ENCODE measurements at regions of chr14 and their contacts with region 1.

Region 1: DNA sequence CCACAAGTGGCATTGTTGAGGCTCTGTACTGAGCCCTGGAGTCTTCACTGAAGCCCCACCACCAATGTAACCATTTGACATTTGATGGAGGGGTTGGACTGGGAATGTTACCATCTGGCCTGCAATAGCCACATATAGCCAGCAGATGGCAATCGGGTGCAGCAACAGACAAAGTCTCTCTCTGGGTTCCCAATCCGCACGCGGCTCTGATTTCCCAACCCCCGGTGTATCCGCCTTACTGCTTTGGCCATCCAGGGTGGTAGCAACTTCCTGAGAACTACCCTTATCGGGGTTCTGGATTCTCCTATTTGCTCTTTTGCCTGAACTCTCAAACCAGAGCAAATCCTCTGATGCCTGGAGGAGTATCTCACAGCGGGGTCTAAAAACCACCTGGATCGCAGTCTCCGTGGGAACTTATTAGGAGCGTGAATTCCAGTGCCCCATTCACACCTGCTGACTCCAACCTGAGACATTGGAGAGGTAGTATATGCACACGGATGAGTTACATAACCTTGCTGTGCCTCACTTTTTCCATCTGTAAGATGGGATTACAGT is 14.2 kb downstream of the VRTN start:
- DNase-seq: peak; percentile 89 to 92
- ATAC-seq: peak; percentile 84
- H3K4me3 ChIP-seq: no peak overlapping the region
- H3K27ac ChIP-seq: no peak overlapping the region
- H3K4me1 ChIP-seq: no peaks in the 10 kb centered on the region
- H3K27me3 ChIP-seq: no peaks in the 10 kb centered on the region

Region 2: GRCh38 chr14:73759714-73760597 is 602.5 kb before region 1 on chr14:
- intact Hi-C with region 1: no loop called
- DNase-seq: peak; percentile 98 to 99
- ATAC-seq: peak; percentile 91
- H3K4me3 ChIP-seq: peak overlapping the region; percentile 80 to 83
- H3K27ac ChIP-seq: peak overlapping the region; percentile 83 to 92
- H3K4me1 ChIP-seq: no peaks in the 10 kb centered on the region
- H3K27me3 ChIP-seq: no peaks in the 10 kb centered on the region

Region 3: GRCh38 chr14:74437496-74438053 is 75.1 kb after region 1 on chr14:
- intact Hi-C with region 1: no loop called
- DNase-seq: no peak
- ATAC-seq: no peak
- H3K4me3 ChIP-seq: no peak overlapping the region
- H3K27ac ChIP-seq: no peak overlapping the region
- H3K4me1 ChIP-seq: no peaks in the 10 kb centered on the region
- H3K27me3 ChIP-seq: no peaks in the 10 kb centered on the region

Region 4: GRCh38 chr14:74459289-74459946 is 97.0 kb after region 1 on chr14:
- intact Hi-C with region 1: no loop called
- DNase-seq: peak in 1 of 2 donors; percentile 57
- ATAC-seq: peak; percentile 59
- H3K4me3 ChIP-seq: no peak overlapping the region
- H3K27ac ChIP-seq: no peak overlapping the region
- H3K4me1 ChIP-seq: no peaks in the 10 kb centered on the region
- H3K27me3 ChIP-seq: no peaks in the 10 kb centered on the region

Region 5: GRCh38 chr14:74483321-74483720 is 120.9 kb after region 1 on chr14:
- intact Hi-C with region 1: loop called in 1 of 2 experiments (anchors 5 kb)
- DNase-seq: no peak
- ATAC-seq: no peak
- H3K4me3 ChIP-seq: no peak overlapping the region
- H3K27ac ChIP-seq: no peak overlapping the region
- H3K4me1 ChIP-seq: no peaks in the 10 kb centered on the region
- H3K27me3 ChIP-seq: no peaks in the 10 kb centered on the region

Region 6: DNA sequence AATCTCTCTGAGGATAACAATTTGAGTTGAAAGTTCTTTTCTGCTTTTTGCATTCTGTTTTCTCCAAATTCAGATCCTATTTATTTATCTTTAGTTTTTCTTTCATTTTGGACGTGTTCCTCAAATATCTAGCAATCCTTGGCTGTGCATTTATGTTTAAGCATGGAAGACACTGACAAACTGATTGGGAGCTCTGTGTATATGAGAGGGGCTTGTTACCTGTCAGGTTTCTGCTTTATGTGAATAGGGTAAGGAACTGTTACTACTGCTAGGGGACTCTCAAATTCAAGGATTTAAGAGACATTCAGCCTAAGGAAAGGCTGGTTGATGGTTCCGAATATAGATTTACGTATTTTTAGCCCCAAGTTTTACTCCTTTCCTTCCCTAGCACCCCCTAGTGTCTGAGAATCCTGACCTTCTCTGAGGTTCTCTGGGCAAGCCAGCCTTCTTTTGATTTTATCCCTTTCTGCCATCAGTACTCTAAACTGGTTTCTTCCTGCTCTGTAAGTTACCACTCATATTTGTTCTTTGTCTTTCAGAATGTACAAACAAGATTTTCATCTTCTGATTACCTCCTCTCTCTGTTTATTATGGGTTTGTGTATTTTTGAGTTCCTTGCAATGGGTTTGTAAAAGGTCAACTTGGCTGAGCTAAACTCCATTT is 431.2 kb after region 1 on chr14:
- intact Hi-C with region 1: loop called (anchors 10 kb)
- DNase-seq: no peak
- ATAC-seq: no peak
- H3K4me3 ChIP-seq: no peak overlapping the region
- H3K27ac ChIP-seq: peak overlapping the region in 1 of 2 donors; percentile 76
- H3K4me1 ChIP-seq: peaks cover 0 to 2% of the 10 kb centered on the region in 2 donors
- H3K27me3 ChIP-seq: no peaks in the 10 kb centered on the region